ENCODE measurements at regions of chr17 and their contacts with region 1.

Region 1: GRCh38 chr17:80743181-80743771 is 198.6 kb downstream of the RPTOR start:
- DNase-seq: peak in 8 of 9 donors; percentile 40 to 82 (median 72)
- ATAC-seq: peak; percentile 75
- H3K4me3 ChIP-seq: peak overlapping the region; percentile 33
- H3K4me3 Mint-ChIP-seq: peak overlapping the region; percentile 80 to 93 (median 85)
- H3K27ac ChIP-seq: peak overlapping the region; percentile 74
- H3K27ac Mint-ChIP-seq: peak overlapping the region; percentile 83 to 95 (median 91)
- H3K4me1 ChIP-seq: peaks cover 0 to 61% of the 10 kb centered on the region in 2 donors
- H3K4me1 Mint-ChIP-seq: peaks cover 39 to 80% (median 69%) of the 10 kb centered on the region in 7 donors
- H3K27me3 ChIP-seq: no peaks in the 10 kb centered on the region
- H3K27me3 Mint-ChIP-seq: no peaks in the 10 kb centered on the region

Region 2: GRCh38 chr17:80704381-80704819 is 38.9 kb before region 1 on chr17:
- CTCF ChIA-PET with region 1: no interaction called
- POLR2A ChIA-PET with region 1: interaction called, 4 read pairs
- intact Hi-C with region 1: loop called in 1 of 2 experiments (anchors 5 kb)
- DNase-seq: no peak
- ATAC-seq: no peak
- H3K4me3 ChIP-seq: no peak overlapping the region
- H3K4me3 Mint-ChIP-seq: peak overlapping the region in 7 of 10 donors; percentile 42 to 76 (median 51)
- H3K27ac ChIP-seq: no peak overlapping the region
- H3K27ac Mint-ChIP-seq: peak overlapping the region in 7 of 9 donors; percentile 34 to 96 (median 88)
- H3K4me1 ChIP-seq: peaks cover 33 to 35% of the 10 kb centered on the region in 2 donors
- H3K4me1 Mint-ChIP-seq: peaks cover 46 to 91% (median 83%) of the 10 kb centered on the region in 7 donors
- H3K27me3 ChIP-seq: no peaks in the 10 kb centered on the region
- H3K27me3 Mint-ChIP-seq: no peaks in the 10 kb centered on the region

Region 3: GRCh38 chr17:80732268-80732667 is 11.0 kb before region 1 on chr17:
- CTCF ChIA-PET with region 1: interaction called, 5 read pairs
- POLR2A ChIA-PET with region 1: interaction called, 12 read pairs
- intact Hi-C with region 1: loop called in 1 of 2 experiments (anchors 1 kb)
- DNase-seq: no peak
- ATAC-seq: no peak
- H3K4me3 ChIP-seq: no peak overlapping the region
- H3K4me3 Mint-ChIP-seq: peak overlapping the region in 2 of 10 donors; percentile 25
- H3K27ac ChIP-seq: no peak overlapping the region
- H3K27ac Mint-ChIP-seq: peak overlapping the region in 6 of 9 donors; percentile 15 to 96 (median 66)
- H3K4me1 ChIP-seq: peaks cover 7 to 15% of the 10 kb centered on the region in 2 donors
- H3K4me1 Mint-ChIP-seq: peaks cover 11 to 88% (median 73%) of the 10 kb centered on the region in 7 donors
- H3K27me3 ChIP-seq: no peaks in the 10 kb centered on the region
- H3K27me3 Mint-ChIP-seq: no peaks in the 10 kb centered on the region

Region 4: DNA sequence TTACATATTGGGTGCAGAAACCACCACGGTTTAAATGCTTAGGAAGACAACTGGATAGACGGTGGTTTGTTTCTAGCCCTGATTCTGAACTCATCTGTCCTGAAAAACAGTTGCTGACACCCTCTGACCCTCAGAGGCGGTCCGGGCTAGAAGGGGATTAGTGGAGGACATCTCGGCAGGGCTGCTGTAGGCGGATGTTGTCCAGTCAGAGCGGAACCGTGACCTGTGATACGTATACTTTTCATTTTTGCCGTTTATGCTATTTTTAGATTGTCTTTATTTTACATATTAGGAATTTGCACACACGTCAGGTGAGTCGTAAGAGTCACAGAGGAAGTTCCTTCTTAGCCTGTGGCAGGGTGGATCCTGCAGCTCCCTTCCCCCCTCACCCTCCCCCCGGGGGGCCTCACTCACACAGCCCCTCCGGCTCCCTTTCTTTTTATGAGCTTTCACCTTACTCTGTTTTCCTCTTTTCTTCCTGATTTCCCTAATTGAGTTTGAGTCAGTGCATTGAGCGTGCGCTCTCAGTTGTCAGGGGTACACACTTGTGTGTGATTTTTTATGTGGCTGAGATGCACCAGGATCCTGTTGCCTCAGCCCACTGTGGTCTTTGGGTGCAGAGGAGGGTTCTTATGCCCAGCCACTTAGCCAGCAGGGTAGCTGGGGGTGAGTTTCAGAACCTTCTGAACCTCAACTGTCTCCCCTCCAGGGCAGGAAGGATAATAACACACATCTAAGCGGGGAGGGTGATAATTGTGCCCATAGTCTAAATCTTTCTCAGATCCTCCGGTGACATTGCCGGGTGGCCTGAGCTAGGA is 37.3 kb after region 1 on chr17:
- CTCF ChIA-PET with region 1: no interaction called
- POLR2A ChIA-PET with region 1: interaction called, 10 read pairs
- intact Hi-C with region 1: loop called in 1 of 2 experiments (anchors 2 kb)
- DNase-seq: peak in 3 of 9 donors; percentile 29 to 57 (median 43)
- ATAC-seq: peak; percentile 40
- H3K4me3 ChIP-seq: peak overlapping the region; percentile 45
- H3K4me3 Mint-ChIP-seq: peak overlapping the region; percentile 62 to 96 (median 82)
- H3K27ac ChIP-seq: peak overlapping the region; percentile 70
- H3K27ac Mint-ChIP-seq: peak overlapping the region; percentile 87 to 99 (median 94)
- H3K4me1 ChIP-seq: peaks cover 38 to 57% of the 10 kb centered on the region in 2 donors
- H3K4me1 Mint-ChIP-seq: peaks cover 30 to 90% (median 77%) of the 10 kb centered on the region in 7 donors
- H3K27me3 ChIP-seq: no peaks in the 10 kb centered on the region
- H3K27me3 Mint-ChIP-seq: no peaks in the 10 kb centered on the region

Measured in naive thymus-derived CD4-positive, alpha-beta T cell (primary cell).